Gastrocnemius medialis (tissue), 4 donors: ENCODE measurements at regions of chrX and their contacts with region 1.

Region 1: GRCh38 chrX:12974796-12975669 is at the start of gene TMSB4X:
- DNase-seq: peak; percentile 35 to 58
- ATAC-seq: peak in 1 of 2 donors; percentile 48
- H3K4me3 ChIP-seq: peak within 1 kb of the TSS; percentile 51 to 71 (median 67)
- H3K27ac ChIP-seq: peak within 1 kb of the TSS; percentile 72 to 84 (median 82)
- H3K4me1 ChIP-seq: no peaks in the 10 kb centered on the region
- H3K27me3 ChIP-seq: peaks cover 0 to 20% (median 10%) of the 10 kb centered on the region in 3 donors
- CTCF ChIP-seq: no peak
- POLR2A ChIP-seq: peak; percentile 61 to 84
- total RNA-seq, gene TMSB4X: 492 to 653 (median 526) TPM

Region 2: DNA sequence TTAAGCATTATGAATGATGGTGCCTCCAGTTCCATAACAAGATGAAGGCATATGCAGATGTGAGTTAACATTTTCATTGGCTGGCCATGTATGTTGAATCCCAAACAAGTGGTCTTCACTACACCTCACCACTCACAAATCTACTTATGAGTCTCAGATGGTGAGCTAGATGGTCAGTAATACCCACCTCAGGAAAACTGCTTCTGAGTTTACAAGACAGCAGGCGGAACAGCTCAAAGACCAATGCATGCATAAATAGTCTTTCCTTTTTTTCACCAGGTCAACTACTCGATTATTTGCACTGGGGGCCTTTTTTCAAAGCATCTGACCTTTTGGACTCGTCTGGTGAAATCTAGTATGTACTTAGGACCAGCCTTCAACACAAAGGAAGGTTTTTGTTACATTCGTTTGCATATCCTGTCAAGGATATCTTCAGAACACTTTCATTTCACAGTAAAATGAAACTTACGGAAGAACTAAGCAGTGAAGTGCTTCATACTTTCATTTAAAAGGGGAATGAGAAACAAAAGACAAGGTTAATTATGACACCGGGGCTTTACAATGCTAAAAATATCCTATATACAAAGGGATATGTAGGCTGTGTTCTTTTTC is 131.3 kb before region 1 on chrX:
- in situ Hi-C with region 1: no loop called
- intact Hi-C with region 1: no loop called
- DNase-seq: no peak
- ATAC-seq: no peak
- H3K4me3 ChIP-seq: no peak overlapping the region
- H3K27ac ChIP-seq: no peak overlapping the region
- H3K4me1 ChIP-seq: no peaks in the 10 kb centered on the region
- H3K27me3 ChIP-seq: no peaks in the 10 kb centered on the region
- CTCF ChIP-seq: no peak
- POLR2A ChIP-seq: no peak

Region 3: GRCh38 chrX:12936947-12937346 is 38.1 kb before region 1 on chrX:
- in situ Hi-C with region 1: no loop called
- intact Hi-C with region 1: no loop called
- DNase-seq: no peak
- ATAC-seq: no peak
- H3K4me3 ChIP-seq: no peak overlapping the region
- H3K27ac ChIP-seq: no peak overlapping the region
- H3K4me1 ChIP-seq: no peaks in the 10 kb centered on the region
- H3K27me3 ChIP-seq: no peaks in the 10 kb centered on the region
- CTCF ChIP-seq: no peak
- POLR2A ChIP-seq: no peak

Region 4: DNA sequence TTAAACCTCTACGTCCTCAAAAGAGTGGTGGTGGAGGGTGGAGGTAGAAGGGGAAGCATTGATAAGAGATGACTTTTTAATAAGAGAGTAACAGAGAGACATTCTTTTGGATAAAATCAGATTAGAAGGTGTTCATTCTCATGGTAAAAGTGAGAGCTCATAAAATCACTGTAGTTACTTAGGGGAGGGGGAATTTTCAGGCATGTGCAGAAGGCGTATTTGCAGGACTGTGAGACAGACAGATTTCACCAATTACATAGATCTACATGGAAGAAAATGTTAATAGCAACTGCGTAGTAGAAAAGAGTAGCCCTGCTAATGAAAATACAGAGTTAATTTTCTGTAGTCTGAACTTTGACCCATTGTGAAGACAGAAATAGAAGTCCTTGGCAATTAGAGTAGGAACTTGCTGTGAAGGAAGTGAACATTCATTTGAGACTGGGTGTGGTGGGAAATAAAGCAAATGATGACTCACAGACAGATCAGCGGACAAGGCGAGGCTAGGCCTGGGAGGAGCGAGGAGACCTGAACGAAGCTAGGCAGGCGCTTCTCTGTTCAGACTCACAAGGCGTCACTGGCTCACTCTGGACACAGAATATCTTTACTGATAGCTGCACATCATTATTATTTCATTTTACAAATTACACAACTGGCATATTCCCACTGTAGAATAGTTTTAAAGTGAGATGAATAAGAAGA is 126.6 kb after region 1 on chrX:
- in situ Hi-C with region 1: no loop called
- intact Hi-C with region 1: loop called (anchors 5 kb)
- DNase-seq: peak; percentile 60 to 66
- ATAC-seq: peak; percentile 97 to 98
- H3K4me3 ChIP-seq: no peak overlapping the region
- H3K27ac ChIP-seq: peak overlapping the region; percentile 39 to 70 (median 64)
- H3K4me1 ChIP-seq: peaks cover 4 to 16% of the 10 kb centered on the region in 2 donors
- H3K27me3 ChIP-seq: peaks cover 0 to 4% (median 0%) of the 10 kb centered on the region in 3 donors
- CTCF ChIP-seq: no peak
- POLR2A ChIP-seq: peak; percentile 26 to 56